AG04450 (cell line): ENCODE measurements at regions of chr1 and their contacts with region 1.

Region 1: DNA sequence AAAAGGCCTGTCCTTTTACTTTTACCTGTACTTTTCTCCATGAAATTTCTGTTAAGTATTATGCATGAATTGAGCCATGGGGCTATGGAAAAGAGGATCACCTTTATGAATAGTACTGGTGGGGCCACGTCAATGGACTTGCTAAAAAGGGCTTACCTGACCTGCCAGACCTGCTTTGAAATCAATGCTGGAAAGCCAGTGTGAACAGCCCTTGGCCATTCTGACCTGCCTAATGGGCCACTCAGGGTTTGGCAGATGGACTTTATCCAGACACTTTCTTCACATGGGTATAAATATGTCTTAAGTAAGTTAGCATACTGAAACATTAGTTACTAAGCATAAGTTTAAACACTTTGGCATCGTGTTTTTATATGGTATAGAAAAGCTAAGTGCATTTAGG is 8.3 kb upstream of the GUK1 start:
- DNase-seq: no peak
- H3K4me3 ChIP-seq: no peak overlapping the region
- H3K27ac ChIP-seq: no peak overlapping the region
- H3K27me3 ChIP-seq: peaks cover 28% of the 10 kb centered on the region
- CTCF ChIP-seq: no peak

Region 2: GRCh38 chr1:227855687-227856086 is 276.1 kb before region 1 on chr1:
- CTCF ChIA-PET with region 1: no interaction called
- POLR2A ChIA-PET with region 1: no interaction called
- DNase-seq: no peak
- H3K4me3 ChIP-seq: no peak overlapping the region
- H3K27ac ChIP-seq: no peak overlapping the region
- H3K27me3 ChIP-seq: no peaks in the 10 kb centered on the region
- CTCF ChIP-seq: no peak

Region 3: GRCh38 chr1:228120857-228121489 is 10.8 kb before region 1 on chr1:
- CTCF ChIA-PET with region 1: interaction called, 16 read pairs
- POLR2A ChIA-PET with region 1: interaction called, 3 read pairs
- DNase-seq: no peak
- H3K4me3 ChIP-seq: no peak overlapping the region
- H3K27ac ChIP-seq: no peak overlapping the region
- H3K27me3 ChIP-seq: peaks cover 9% of the 10 kb centered on the region
- CTCF ChIP-seq: no peak

Region 4: GRCh38 chr1:228165372-228166169 is 33.8 kb after region 1 on chr1 and contains the start of gene IBA57:
- CTCF ChIA-PET with region 1: interaction called, 10 read pairs
- POLR2A ChIA-PET with region 1: interaction called, 3 read pairs
- DNase-seq: peak; percentile 97
- H3K4me3 ChIP-seq: peak within 1 kb of the TSS; percentile 75
- H3K27ac ChIP-seq: peak within 1 kb of the TSS; percentile 81
- H3K27me3 ChIP-seq: no peaks in the 10 kb centered on the region
- CTCF ChIP-seq: peak; percentile 83
- polyA plus RNA-seq, gene IBA57: 1.4 and 1.7 TPM in 2 replicates

Region 5: GRCh38 chr1:228405987-228406265 is 274.2 kb after region 1 on chr1:
- CTCF ChIA-PET with region 1: no interaction called
- POLR2A ChIA-PET with region 1: interaction called, 16 read pairs
- DNase-seq: no peak
- H3K4me3 ChIP-seq: peak overlapping the region; percentile 91
- H3K27ac ChIP-seq: no peak overlapping the region
- H3K27me3 ChIP-seq: no peaks in the 10 kb centered on the region
- CTCF ChIP-seq: no peak

Region 6: DNA sequence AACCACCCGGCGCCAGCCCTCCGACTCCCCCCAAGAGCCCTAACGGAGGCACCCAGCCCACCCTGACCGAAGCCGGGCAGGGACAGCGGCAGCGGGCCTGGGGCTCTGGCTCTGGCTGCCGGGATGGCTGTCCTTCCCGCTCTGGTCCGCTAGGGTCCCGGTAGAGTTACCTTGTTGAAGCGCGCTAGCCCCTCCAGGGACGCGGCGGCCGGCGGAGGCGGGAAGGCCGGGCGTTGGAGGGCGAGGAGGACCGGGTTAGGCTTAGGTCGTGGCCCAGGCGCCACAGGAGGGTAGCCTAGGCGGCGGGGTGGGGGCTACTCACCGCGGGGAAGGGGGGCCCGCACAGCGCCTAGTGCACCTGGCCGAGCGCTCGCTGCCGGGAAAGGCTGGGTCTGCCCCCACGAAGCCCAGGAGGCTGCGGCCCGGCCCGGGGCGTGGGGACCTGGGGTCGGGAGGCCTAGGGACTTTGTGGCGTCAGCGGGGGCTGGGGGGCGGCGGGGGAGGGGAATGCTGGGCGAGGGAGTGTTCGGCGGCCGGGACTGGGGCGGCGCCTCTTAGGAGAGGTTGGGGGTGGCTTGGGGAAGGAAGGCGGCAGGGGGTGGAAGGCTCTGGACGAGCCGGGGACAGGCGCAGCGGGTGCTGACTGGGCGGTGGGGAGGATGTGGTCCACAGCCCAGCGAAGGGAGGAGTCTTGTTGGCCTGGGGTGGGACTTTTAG is 284.6 kb after region 1 on chr1 and contains the start of gene TRIM17:
- CTCF ChIA-PET with region 1: no interaction called
- POLR2A ChIA-PET with region 1: no interaction called
- DNase-seq: no peak
- H3K4me3 ChIP-seq: peak within 1 kb of the TSS; percentile 52
- H3K27ac ChIP-seq: no peak within 1 kb of the TSS
- H3K27me3 ChIP-seq: peaks cover 6% of the 10 kb centered on the region
- CTCF ChIP-seq: peak; percentile 37
- polyA plus RNA-seq, gene TRIM17: 0.16 and 0.27 TPM in 2 replicates

Region 7: GRCh38 chr1:228515200-228515834 is 383.6 kb after region 1 on chr1:
- CTCF ChIA-PET with region 1: interaction called, 11 read pairs
- POLR2A ChIA-PET with region 1: no interaction called
- DNase-seq: peak; percentile 18
- H3K4me3 ChIP-seq: no peak overlapping the region
- H3K27ac ChIP-seq: no peak overlapping the region
- H3K27me3 ChIP-seq: peaks cover 38% of the 10 kb centered on the region
- CTCF ChIP-seq: peak; percentile 75